Natural killer cell (primary cell): ENCODE measurements at regions of chr17 and their contacts with region 1.

Region 1: GRCh38 chr17:2215616-2216364 is 87.8 kb downstream of the SMG6 start:
- DNase-seq: peak; percentile 63 to 89
- ATAC-seq: peak; percentile 95 to 96 (median 96)
- H3K4me3 ChIP-seq: peak overlapping the region; percentile 1
- H3K4me3 Mint-ChIP-seq: peak overlapping the region; percentile 82
- H3K27ac ChIP-seq: peak overlapping the region; percentile 80
- H3K27ac Mint-ChIP-seq: peak overlapping the region; percentile 94 to 98
- H3K4me1 ChIP-seq: peaks cover 25% of the 10 kb centered on the region
- H3K4me1 Mint-ChIP-seq: peaks cover 35 to 47% of the 10 kb centered on the region in 2 donors
- H3K27me3 ChIP-seq: no peaks in the 10 kb centered on the region
- H3K27me3 Mint-ChIP-seq: no peaks in the 10 kb centered on the region
- CTCF ChIP-seq: no peak

Region 2: GRCh38 chr17:2184993-2185931 is 30.5 kb before region 1 on chr17:
- intact Hi-C with region 1: loop called (anchors 2 kb)
- DNase-seq: peak in 1 of 2 donors; percentile 54
- ATAC-seq: peak; percentile 89 to 92 (median 92)
- H3K4me3 ChIP-seq: no peak overlapping the region
- H3K4me3 Mint-ChIP-seq: peak overlapping the region; percentile 65
- H3K27ac ChIP-seq: peak overlapping the region; percentile 56
- H3K27ac Mint-ChIP-seq: peak overlapping the region; percentile 88 to 89
- H3K4me1 ChIP-seq: peaks cover 57% of the 10 kb centered on the region
- H3K4me1 Mint-ChIP-seq: peaks cover 85 to 95% of the 10 kb centered on the region in 2 donors
- H3K27me3 ChIP-seq: no peaks in the 10 kb centered on the region
- H3K27me3 Mint-ChIP-seq: no peaks in the 10 kb centered on the region
- CTCF ChIP-seq: no peak

Region 3: DNA sequence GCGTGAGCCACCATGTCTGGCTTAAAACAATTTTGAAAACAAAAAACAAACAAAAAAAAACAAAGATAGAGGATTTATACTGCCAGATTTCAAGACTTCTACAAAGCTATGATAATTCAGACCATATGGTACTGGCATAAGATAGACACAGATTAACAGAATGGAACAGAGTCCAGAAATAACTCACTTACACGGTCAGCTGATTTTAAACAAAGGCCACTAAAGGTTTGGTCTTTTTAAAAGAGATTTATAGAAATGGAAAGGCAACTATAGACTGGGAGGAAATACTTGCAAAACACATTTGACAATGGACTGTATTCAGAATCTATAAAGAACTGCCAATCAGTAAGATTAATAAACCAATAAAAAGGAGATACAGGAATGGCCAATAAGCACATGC is 233.7 kb after region 1 on chr17:
- intact Hi-C with region 1: no loop called
- DNase-seq: no peak
- ATAC-seq: no peak
- H3K4me3 ChIP-seq: no peak overlapping the region
- H3K4me3 Mint-ChIP-seq: no peak overlapping the region
- H3K27ac ChIP-seq: no peak overlapping the region
- H3K27ac Mint-ChIP-seq: peak overlapping the region in 1 of 2 donors; percentile 4
- H3K4me1 ChIP-seq: no peaks in the 10 kb centered on the region
- H3K4me1 Mint-ChIP-seq: peaks cover 0 to 3% of the 10 kb centered on the region in 2 donors
- H3K27me3 ChIP-seq: no peaks in the 10 kb centered on the region
- H3K27me3 Mint-ChIP-seq: no peaks in the 10 kb centered on the region
- CTCF ChIP-seq: no peak